ENCODE measurements at regions of chr20 and their contacts with region 1.

Region 1: GRCh38 chr20:58087193-58087858 is 141.1 kb downstream of the ANKRD60 start:
- DNase-seq: no peak
- ATAC-seq: peak; percentile 53; the same call in 1 of the 3 replicates
- H3K4me3 ChIP-seq: no peak overlapping the region
- H3K27ac ChIP-seq: no peak overlapping the region
- H3K4me1 ChIP-seq: no peaks in the 10 kb centered on the region
- H3K27me3 ChIP-seq: peaks cover 2 to 4% of the 10 kb centered on the region in 2 experiments; a peak in 3 of 4 replicates
- CTCF ChIP-seq: peak; percentile 68 to 86 (median 83)
- EP300 ChIP-seq: no peak
- POLR2A ChIP-seq: no peak
- RAD21 ChIP-seq: peak; percentile 66

Region 2: DNA sequence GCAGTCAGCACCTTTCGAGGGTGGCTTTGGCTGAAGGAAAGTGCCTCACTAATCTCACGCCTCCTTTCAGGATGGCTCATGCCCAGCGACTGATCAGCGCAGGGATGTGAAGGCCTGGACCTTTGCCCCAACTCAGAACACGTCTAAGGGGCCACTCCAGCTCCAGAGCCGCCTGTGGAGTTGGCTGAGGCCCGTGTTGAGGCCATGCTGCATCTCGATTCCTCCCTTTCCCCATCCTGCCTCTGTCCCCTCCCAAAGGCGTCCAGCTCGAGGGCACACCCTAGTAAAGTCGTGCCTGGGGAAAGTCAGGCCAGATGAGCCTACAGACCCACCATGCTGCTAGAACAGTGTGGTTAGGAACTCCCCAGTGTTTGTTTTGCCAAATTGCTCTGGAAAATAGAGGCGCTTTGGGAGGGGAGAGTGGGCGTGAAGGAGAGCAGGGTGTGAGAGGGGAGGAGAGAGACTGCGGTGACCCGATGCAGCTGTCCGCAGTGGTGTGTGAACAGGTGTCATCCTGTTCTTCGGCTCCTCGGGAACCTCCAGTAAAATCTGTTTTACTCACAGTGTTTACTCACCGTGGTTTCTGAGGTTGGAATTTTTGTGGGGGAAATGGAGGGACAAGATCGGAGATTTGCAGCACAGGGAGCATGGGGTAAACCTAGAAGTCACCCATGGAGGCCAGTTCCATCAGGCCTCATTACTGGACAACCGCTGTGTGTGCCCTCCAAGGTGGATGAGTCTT is 292.6 kb before region 1 on chr20:
- CTCF ChIA-PET with region 1: no interaction called
- POLR2A ChIA-PET with region 1: no interaction called
- RAD21 ChIA-PET with region 1: no interaction called
- SMC1A ChIA-PET with region 1: no interaction called
- in situ Hi-C with region 1: no loop called
- intact Hi-C with region 1: no loop called
- DNase-seq: no peak
- ATAC-seq: no peak
- H3K4me3 ChIP-seq: no peak overlapping the region
- H3K27ac ChIP-seq: no peak overlapping the region
- H3K4me1 ChIP-seq: no peaks in the 10 kb centered on the region
- H3K27me3 ChIP-seq: peaks cover 0 to 4% of the 10 kb centered on the region in 2 experiments; a peak in 2 of 4 replicates
- CTCF ChIP-seq: no peak
- EP300 ChIP-seq: no peak
- POLR2A ChIP-seq: no peak
- RAD21 ChIP-seq: no peak

Region 3: DNA sequence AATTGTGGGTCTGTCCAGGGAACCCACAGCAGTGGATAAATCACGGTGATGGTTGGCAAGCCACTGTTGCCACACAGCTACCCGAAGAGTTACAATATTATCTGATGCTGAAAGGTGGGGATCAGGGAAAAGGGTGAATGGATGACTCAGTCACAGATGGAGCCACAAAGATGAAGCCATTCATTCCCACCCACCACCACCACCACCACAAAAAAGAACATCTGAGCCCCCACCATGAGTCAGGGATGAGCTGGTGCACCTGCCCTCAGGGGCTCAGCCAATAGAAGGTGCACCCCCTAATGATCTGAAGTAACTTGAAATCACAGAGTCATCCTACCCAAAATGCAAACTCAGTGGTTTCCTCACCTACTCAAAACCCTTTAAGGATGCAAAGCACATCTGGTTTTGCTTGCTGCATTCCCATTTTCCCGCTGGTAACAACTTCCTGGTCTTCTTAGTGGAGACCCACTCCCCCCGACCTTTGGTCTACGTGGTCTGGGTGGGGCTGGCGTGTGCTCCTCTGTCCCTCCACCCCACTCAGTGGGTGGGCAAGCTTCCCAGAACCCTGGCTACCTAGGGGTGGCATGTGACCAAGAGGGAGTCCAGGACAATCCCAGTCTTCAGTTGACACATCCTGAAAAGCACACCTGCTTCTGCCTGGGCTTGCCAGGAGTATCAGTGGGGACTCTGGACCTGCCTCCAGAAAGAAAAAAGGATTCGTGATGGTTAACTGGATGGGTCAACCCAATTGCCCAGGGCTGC is 15.6 kb after region 1 on chr20:
- CTCF ChIA-PET with region 1: interaction called, 12 read pairs
- POLR2A ChIA-PET with region 1: no interaction called
- RAD21 ChIA-PET with region 1: interaction called, 3 read pairs
- SMC1A ChIA-PET with region 1: no interaction called
- in situ Hi-C with region 1: no loop called
- intact Hi-C with region 1: no loop called
- DNase-seq: no peak
- ATAC-seq: no peak
- H3K4me3 ChIP-seq: no peak overlapping the region
- H3K27ac ChIP-seq: no peak overlapping the region
- H3K4me1 ChIP-seq: no peaks in the 10 kb centered on the region
- H3K27me3 ChIP-seq: peaks cover 0 to 2% of the 10 kb centered on the region in 2 experiments; a peak in 2 of 4 replicates
- CTCF ChIP-seq: no peak
- EP300 ChIP-seq: no peak
- POLR2A ChIP-seq: no peak
- RAD21 ChIP-seq: no peak

Region 4: GRCh38 chr20:58135441-58136149 is 48.3 kb after region 1 on chr20:
- CTCF ChIA-PET with region 1: interaction called, 3 read pairs
- POLR2A ChIA-PET with region 1: no interaction called
- RAD21 ChIA-PET with region 1: no interaction called
- SMC1A ChIA-PET with region 1: no interaction called
- in situ Hi-C with region 1: loop called (anchors 5 kb)
- intact Hi-C with region 1: no loop called
- DNase-seq: no peak
- ATAC-seq: no peak
- H3K4me3 ChIP-seq: no peak overlapping the region
- H3K27ac ChIP-seq: no peak overlapping the region
- H3K4me1 ChIP-seq: no peaks in the 10 kb centered on the region
- H3K27me3 ChIP-seq: peaks cover 4 to 10% of the 10 kb centered on the region in 2 experiments; a peak in 3 of 4 replicates
- CTCF ChIP-seq: no peak
- EP300 ChIP-seq: no peak
- POLR2A ChIP-seq: no peak
- RAD21 ChIP-seq: no peak

Region 5: GRCh38 chr20:58219301-58219700 is 132.0 kb after region 1 on chr20:
- CTCF ChIA-PET with region 1: no interaction called
- POLR2A ChIA-PET with region 1: no interaction called
- RAD21 ChIA-PET with region 1: no interaction called
- SMC1A ChIA-PET with region 1: no interaction called
- in situ Hi-C with region 1: no loop called
- intact Hi-C with region 1: no loop called
- DNase-seq: no peak
- ATAC-seq: no peak
- H3K4me3 ChIP-seq: no peak overlapping the region
- H3K27ac ChIP-seq: no peak overlapping the region
- H3K4me1 ChIP-seq: no peaks in the 10 kb centered on the region
- H3K27me3 ChIP-seq: peaks cover 2 to 8% of the 10 kb centered on the region in 2 experiments; a peak in 3 of 4 replicates
- CTCF ChIP-seq: no peak
- EP300 ChIP-seq: no peak
- POLR2A ChIP-seq: no peak
- RAD21 ChIP-seq: no peak